ENCODE measurements at regions of chr1 and their contacts with region 1.

Region 1: DNA sequence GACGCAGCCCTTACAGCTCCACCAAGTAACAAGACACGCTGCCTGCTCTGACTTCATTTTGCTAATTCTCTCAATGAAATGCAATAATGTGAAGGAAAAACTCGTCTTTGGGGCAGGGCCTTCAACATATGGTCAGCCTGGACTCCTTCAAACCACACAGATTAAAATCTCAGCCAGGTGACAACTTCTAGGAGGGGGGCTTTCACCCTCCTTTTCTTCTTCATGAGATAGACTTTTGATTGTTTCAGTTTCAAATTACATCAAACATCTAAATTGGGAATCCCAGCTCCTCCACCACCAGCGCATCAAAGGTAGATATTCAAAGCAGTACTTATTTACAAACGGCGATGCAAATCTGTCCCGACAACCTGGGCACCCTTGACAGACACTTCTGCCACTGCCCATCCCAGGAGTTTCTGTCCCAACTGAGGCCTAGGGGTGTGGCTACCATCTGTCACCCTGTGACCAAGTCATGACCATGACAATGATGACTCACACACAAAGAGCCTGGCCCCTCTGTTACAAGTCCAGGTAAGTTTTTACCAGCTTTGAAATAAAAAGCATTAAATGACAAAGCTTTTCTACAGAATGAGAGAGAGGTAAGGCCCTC is 29.7 kb downstream of the SSBP3 start:
- DNase-seq: peak; percentile 74
- H3K4me3 Mint-ChIP-seq: no peak overlapping the region
- H3K27ac Mint-ChIP-seq: peak overlapping the region; percentile 33
- H3K4me1 Mint-ChIP-seq: peaks cover 84% of the 10 kb centered on the region
- H3K27me3 Mint-ChIP-seq: no peaks in the 10 kb centered on the region

Region 2: DNA sequence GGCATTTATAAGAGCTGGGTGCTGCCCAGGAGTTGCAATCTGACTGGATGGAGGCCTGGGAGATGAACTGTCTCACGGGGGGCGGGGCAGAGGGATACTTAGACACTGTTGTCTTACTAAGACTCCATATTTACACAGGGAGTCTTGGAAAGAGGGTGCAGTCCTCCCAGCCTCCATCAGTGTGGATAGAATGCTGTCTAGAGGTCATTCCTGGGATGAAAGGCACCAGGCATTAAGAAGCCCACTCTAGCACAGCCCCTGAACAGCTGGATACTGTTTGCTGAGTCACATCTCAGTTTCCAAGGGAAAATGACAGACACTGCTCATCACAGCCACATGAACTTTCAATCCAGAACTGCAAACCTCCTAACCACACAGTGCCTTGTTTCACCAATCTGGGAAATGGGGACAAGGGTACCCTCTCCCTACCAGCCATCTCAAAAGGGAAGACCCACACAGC is 13.6 kb before region 1 on chr1:
- CTCF ChIA-PET with region 1: no interaction called
- intact Hi-C with region 1: no loop called
- DNase-seq: no peak
- H3K4me3 Mint-ChIP-seq: no peak overlapping the region
- H3K27ac Mint-ChIP-seq: no peak overlapping the region
- H3K4me1 Mint-ChIP-seq: peaks cover 69% of the 10 kb centered on the region
- H3K27me3 Mint-ChIP-seq: no peaks in the 10 kb centered on the region

Region 3: GRCh38 chr1:54400329-54400728 is 23.8 kb after region 1 on chr1:
- CTCF ChIA-PET with region 1: interaction called, 3 read pairs
- intact Hi-C with region 1: loop called (anchors 1 kb)
- DNase-seq: peak; percentile 78
- H3K4me3 Mint-ChIP-seq: peak overlapping the region; percentile 36
- H3K27ac Mint-ChIP-seq: peak overlapping the region; percentile 68
- H3K4me1 Mint-ChIP-seq: peaks cover 74% of the 10 kb centered on the region
- H3K27me3 Mint-ChIP-seq: no peaks in the 10 kb centered on the region

Region 4: DNA sequence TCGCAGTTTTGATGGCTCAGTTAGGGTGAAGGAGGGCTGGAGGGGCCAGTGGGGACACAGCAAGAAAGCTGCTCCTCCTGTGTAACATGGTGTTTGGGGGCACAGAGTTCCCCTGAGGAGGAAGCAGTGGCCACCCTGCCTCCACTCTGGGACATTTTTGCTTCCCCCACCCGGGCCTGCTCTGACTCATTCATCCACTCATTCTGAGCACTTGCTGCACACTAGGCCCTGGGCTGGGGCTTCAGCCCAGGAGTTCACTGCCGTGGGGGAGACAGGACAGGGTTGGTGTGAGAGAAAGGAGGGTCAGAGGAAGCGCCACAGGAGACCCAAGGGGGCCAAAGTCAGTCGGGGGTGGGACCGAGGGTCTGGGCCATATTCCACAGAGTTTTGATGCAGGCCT is 130.1 kb after region 1 on chr1:
- CTCF ChIA-PET with region 1: no interaction called
- intact Hi-C with region 1: no loop called
- DNase-seq: no peak
- H3K4me3 Mint-ChIP-seq: no peak overlapping the region
- H3K27ac Mint-ChIP-seq: no peak overlapping the region
- H3K4me1 Mint-ChIP-seq: no peaks in the 10 kb centered on the region
- H3K27me3 Mint-ChIP-seq: no peaks in the 10 kb centered on the region

Region 5: DNA sequence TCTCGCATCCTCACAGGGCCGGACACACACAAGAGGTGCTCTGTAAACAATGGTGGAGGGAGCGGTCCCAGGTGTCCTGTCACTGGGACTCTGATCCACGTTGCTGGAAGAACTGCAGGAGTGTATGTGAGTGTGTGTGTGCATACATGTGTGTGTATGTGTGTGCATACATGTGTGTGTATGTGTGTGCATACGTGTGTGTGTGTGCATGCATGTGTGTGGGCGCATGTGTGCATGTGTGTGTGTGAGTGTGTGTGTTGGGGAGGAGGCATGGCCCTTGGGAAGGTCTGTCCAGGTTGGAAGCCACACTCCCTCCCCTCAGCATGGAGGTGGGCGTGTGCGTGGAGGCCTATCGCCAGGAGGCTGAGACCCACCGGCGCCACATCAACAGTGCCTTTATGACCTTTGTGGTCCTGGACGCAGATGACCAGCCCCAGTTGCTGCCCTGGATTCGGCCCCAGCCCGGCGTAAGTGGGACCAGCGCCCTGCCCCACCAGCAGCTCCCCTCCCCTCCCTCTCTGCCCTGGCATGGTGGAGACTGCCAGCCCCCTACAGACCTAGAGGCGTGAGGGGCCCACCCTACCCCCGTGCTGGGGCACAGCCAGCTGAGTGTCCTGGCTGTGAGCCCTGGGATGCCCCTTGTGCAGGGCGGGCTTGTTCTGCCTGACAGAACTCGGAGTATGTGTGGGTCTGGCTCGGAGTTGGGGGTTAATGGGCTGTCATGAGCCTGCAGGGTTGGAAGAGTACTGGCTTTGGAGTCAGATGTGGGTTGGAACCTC is 224.6 kb after region 1 on chr1:
- CTCF ChIA-PET with region 1: no interaction called
- intact Hi-C with region 1: no loop called
- DNase-seq: no peak
- H3K4me3 Mint-ChIP-seq: no peak overlapping the region
- H3K27ac Mint-ChIP-seq: no peak overlapping the region
- H3K4me1 Mint-ChIP-seq: peaks cover 14% of the 10 kb centered on the region
- H3K27me3 Mint-ChIP-seq: no peaks in the 10 kb centered on the region

Measured in activated naive CD4-positive, alpha-beta T cell treated with anti-CD3 and anti-CD28 coated beads for 36 hours (primary cell).